Testis (tissue), 5 donors: ENCODE measurements at regions of chr2 and their contacts with region 1.

Region 1: GRCh38 chr2:134460583-134460998 is 206.7 kb downstream of the MGAT5 start:
- DNase-seq: peak; percentile 86
- H3K4me3 ChIP-seq: no peak overlapping the region
- H3K27ac ChIP-seq: no peak overlapping the region
- H3K4me1 ChIP-seq: no peaks in the 10 kb centered on the region
- H3K27me3 ChIP-seq: no peaks in the 10 kb centered on the region
- CTCF ChIP-seq: peak; percentile 59 to 69 (median 61)
- POLR2A ChIP-seq: no peak

Region 2: DNA sequence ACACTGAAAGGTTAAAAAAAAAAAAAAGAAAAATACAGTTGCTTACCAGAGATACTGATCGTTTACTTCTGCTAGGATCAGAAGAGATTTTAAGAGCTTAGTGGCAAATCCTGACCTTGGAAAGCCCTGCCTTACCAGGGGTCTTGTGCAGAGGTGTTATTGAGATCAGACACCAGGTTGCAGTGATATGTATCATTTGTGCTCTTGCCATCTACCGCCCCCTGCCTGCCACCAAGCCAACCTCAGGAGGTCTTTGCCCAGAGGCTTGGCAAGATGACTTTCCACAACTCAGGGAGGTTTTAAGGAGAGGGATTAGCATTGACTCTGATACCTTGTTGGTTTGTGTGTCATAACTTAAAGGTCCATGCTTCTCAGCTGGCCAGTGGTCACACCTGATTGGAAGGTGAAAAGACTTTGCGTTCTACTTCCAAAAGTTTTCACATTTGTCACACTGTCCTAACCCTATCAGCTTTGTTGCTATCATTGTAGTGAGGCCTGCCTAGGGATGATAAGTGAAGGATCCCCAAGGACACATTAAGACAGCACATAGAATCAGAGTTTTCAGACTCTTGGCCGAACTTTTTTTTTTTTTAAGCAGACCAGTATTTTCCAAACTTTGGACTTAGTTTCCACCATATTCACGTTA is 252.9 kb before region 1 on chr2:
- intact Hi-C with region 1: no loop called
- DNase-seq: peak; percentile 77
- H3K4me3 ChIP-seq: no peak overlapping the region
- H3K27ac ChIP-seq: no peak overlapping the region
- H3K4me1 ChIP-seq: peaks cover 34% of the 10 kb centered on the region
- H3K27me3 ChIP-seq: no peaks in the 10 kb centered on the region
- CTCF ChIP-seq: peak; percentile 9 to 44 (median 35)
- POLR2A ChIP-seq: no peak

Region 3: DNA sequence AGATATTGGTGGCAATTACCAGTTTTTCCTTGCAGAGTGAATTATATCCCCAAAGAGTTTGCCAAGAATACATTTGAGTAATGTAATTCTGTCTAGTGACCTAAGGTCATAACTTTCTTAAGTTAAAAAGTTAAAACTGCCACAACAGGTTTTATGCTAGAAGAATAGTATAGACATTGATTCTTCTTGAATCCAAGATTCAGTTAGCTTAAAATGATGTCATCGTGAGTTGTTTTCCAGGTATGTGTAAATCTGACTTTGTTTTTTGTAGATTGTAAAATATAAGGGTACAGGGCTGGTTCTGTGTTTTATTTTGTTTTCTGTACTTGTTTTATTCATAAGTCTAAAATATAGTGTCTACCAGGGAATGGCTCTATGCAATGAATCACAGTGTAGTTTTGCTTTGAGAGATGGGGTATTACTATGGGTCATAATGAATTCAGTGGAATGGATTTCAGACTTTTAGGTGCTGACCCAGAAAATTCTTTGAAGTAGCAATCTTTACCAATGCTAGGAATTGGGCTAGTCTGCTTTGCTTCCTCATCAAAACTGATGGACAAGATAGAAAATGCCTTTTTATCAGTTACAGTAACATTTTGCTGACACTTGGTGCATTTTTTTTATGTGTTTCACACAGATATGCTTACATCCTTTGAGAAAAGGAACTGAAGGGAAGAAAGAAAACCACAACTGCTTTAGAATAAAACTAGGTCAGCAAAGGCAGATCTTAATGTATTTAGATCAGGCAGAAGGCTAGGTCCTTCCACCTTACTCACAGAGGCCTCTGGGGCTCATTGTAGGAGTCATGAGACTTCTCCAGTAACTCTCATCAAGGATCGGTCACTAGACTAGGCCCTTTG is 227.5 kb before region 1 on chr2:
- intact Hi-C with region 1: no loop called
- DNase-seq: no peak
- H3K4me3 ChIP-seq: no peak overlapping the region
- H3K27ac ChIP-seq: no peak overlapping the region
- H3K4me1 ChIP-seq: no peaks in the 10 kb centered on the region
- H3K27me3 ChIP-seq: no peaks in the 10 kb centered on the region
- CTCF ChIP-seq: peak in 1 of 3 experiments; percentile 4
- POLR2A ChIP-seq: no peak

Region 4: GRCh38 chr2:134897932-134898331 is 437.3 kb after region 1 on chr2:
- intact Hi-C with region 1: loop called (anchors 10 kb)
- DNase-seq: no peak
- H3K4me3 ChIP-seq: no peak overlapping the region
- H3K27ac ChIP-seq: no peak overlapping the region
- H3K4me1 ChIP-seq: no peaks in the 10 kb centered on the region
- H3K27me3 ChIP-seq: no peaks in the 10 kb centered on the region
- CTCF ChIP-seq: peak in 1 of 3 experiments; percentile 41
- POLR2A ChIP-seq: no peak